Colonic mucosa (tissue), 4 donors: ENCODE measurements at regions of chr18 and their contacts with region 1.

Region 1: DNA sequence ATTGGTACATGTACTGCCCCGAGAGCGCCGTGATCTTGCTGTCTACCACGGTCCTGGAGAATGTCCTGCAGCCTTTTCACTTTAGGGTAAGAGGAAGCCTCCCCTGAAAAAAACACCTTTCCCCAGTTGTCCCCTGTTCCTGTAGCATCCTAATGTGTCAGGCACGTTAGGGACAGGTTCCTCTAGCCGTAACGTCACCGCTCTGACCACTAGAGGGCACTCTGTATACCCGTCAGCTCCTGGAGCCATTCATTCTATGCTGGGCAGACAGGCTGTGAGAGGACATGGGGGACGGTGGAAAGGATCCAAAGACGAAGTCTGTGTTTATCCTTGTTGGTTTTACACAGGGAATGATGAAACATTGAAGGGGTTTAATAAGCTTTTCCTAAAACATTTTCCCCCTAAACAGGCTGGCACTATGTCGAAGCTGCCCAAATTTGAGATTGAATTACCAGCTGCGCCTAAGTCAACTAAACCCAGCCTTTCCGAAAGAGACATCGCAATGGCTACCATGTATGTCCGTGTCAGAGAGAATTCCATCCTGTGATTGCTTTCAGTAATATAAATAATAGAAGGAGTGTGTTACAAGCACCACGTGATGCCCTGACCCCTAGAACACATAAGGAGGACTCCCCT is 12.7 kb downstream of the RMC1 start:
- DNase-seq: peak; percentile 83
- H3K4me3 ChIP-seq: no peak overlapping the region
- H3K27ac ChIP-seq: no peak overlapping the region
- H3K4me1 ChIP-seq: no peaks in the 10 kb centered on the region
- H3K27me3 ChIP-seq: no peaks in the 10 kb centered on the region
- CTCF ChIP-seq: peak; percentile 75

Region 2: DNA sequence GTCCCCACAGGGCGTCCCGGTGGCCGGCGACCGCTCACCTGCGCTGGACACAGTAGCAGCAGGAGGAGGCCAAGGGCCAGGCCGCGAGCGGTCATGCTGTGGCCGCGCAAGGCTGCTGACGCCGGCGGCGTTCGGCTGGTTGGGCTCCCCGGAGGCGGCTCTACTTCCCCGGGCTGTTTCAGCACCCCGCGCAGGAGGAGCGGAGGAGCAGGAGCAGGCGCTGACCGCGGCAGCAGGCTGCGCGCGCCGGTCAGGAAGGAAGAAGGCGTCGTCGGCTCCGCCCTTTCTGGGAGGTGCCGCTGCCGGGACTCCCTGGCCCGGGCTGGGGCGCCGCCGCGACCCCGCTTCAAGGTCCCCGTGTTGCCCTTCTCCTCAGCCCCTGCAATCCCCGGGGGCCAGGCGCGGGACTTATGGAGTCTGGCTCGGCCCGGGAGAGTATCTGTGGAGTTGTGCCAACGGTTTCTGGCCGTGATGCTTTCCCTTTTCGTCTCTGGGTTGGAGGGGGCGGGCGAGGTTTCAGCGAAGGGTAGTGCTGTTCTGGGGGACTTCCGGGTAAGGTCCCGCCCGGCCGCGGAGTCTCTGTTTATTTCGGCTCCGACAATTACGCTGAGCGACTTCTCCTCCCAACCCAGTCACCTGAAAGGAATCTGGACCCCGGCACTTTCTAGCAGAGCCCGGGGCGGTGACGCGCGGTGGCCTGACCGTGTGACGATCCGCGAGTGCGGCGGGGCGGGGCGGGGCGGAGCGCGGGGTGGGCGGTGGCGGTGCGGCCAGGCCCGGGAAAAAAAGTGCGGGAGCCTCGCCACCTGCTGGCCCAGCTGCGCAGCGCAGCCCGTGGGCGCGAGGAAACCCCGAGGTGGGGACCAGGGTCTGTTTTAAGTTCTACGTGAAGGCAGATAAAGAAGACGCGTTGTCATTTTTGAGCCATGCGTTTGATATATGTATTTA is 70.5 kb after region 1 on chr18 and contains the start of gene NPC1:
- intact Hi-C with region 1: loop called (anchors 2 kb)
- DNase-seq: peak; percentile 95
- H3K4me3 ChIP-seq: peak within 1 kb of the TSS; percentile 94
- H3K27ac ChIP-seq: peak within 1 kb of the TSS; percentile 100
- H3K4me1 ChIP-seq: peaks cover 4% of the 10 kb centered on the region
- H3K27me3 ChIP-seq: no peaks in the 10 kb centered on the region
- CTCF ChIP-seq: peak; percentile 96
- total RNA-seq, gene NPC1: 29.9 to 32.3 TPM

Region 3: GRCh38 chr18:23703057-23703986 is 187.3 kb after region 1 on chr18:
- intact Hi-C with region 1: loop called (anchors 5 kb)
- DNase-seq: peak; percentile 36
- H3K4me3 ChIP-seq: no peak overlapping the region
- H3K27ac ChIP-seq: no peak overlapping the region
- H3K4me1 ChIP-seq: no peaks in the 10 kb centered on the region
- H3K27me3 ChIP-seq: no peaks in the 10 kb centered on the region
- CTCF ChIP-seq: peak; percentile 43